ENCODE measurements at regions of chr12 and their contacts with region 1.

Region 1: DNA sequence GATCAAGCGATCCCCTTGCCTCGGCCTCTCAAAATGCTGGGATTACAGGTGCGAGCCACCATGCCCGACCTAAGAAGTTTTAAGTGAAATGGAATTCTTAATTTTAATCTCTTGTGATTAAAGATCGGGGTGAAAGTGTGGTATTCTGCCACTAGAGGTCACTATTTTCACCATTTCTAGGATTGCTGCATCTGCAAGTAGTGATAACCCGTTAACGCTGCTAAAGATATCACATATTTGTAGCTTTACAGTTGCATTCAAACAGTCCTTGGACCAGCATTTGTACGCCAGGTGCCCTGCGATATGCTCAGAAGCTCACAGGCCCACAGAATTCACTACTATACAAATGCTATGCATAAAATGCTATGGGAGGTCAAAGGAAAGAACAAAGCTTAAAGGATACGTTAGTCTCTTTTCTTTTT is 19.3 kb downstream of the CCDC62 start:
- DNase-seq: no peak

Region 2: GRCh38 chr12:122752464-122753318 is 41.0 kb before region 1 on chr12 and contains the start of gene DENR:
- intact Hi-C with region 1: no loop called
- DNase-seq: peak; percentile 100
- total RNA-seq, gene DENR: 32.6 to 32.8 TPM

Region 3: GRCh38 chr12:122851820-122852219 is 58.1 kb after region 1 on chr12:
- intact Hi-C with region 1: loop called in 1 of 2 experiments (anchors 10 kb)
- DNase-seq: no peak

Region 4: GRCh38 chr12:122951979-122952892 is 158.5 kb after region 1 on chr12:
- intact Hi-C with region 1: loop called (anchors 5 to 10 kb)
- DNase-seq: peak; percentile 92

Region 5: DNA sequence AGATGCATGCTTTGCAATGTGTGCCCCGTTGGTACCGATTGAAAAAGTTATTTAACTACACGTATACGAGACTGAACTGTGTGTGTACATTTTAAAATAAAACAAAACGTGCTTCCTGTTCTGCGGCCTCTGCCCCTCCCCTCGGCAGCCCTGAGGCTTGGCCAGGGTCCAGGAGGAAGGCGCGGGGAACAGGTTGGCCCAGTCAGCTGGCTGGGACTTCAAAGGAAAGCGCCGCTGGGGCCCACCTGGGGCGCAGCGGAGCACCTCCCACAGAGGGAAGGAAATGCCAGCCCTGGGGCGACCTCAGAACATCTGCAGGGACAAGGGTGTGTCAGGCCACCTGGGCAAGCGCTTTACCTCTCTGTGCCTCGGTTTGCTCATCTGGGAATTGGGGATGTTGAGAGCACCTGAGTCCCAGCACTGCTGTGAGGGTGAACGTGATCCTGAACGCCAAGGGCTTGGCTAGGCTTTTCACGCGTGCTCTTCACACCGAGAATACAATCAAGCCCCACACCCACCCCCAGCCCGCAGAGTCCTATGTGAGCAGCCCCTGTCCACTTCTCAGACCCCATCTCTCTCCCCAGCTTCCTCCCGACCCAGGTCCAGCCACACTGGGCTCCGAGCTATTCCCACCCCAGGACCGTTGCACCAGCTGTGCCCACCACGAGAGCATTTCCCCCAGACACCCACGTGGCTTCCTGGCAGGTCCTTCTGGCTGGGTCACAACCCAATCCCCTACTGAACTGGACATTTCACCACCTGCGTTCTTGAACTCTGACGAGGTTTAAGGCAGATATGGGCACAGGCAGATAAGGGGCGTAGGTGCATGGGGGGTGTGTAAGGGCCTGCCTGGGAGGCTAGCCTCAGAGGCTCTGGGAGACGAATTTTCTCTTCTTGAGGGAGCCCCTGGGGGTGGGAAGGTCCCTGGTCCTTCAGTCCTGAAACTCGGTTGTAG is 1815.6 kb after region 1 on chr12:
- intact Hi-C with region 1: no loop called
- DNase-seq: peak; percentile 92